ENCODE measurements at regions of chr1 and their contacts with region 1.

Region 1: GRCh38 chr1:186605762-186606350 is 74.4 kb downstream of the PTGS2 start:
- DNase-seq: peak; percentile 37

Region 2: DNA sequence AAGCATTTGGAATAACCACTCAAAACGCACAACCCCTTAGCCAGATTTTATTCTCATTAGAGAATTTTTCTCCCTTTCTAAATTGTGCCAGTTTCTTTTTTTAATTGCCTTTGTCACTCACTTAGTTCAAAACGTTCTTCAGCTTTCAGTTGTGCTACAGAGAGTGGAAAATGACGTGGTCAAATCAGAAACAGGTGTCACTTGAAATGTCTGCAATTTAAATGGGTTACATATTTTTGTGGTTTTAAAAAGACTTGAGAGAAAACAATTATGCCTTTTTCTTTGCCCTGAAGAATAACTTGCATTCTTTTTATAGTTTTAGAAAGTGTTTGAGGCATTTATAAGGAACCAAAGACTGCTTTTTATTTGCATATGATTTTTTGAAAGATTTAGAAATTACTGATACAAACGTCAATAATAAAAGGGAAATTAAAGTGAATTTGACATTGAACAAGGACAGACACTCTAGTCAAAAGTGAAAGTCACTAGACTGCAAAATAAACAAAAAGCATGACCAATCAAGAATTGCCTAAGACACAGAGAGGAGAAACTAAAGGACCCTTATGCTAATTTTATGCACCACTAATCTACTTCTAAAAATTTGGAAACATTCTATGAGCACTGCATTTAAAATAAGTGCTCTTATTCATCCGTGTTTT is 421.8 kb before region 1 on chr1:
- in situ Hi-C with region 1: no loop called
- DNase-seq: peak; percentile 58

Region 3: GRCh38 chr1:186985889-186986491 is 380.1 kb after region 1 on chr1:
- in situ Hi-C with region 1: loop called (anchors 25 kb)
- DNase-seq: peak; percentile 69